CD4-positive, alpha-beta T cell (primary cell): ENCODE measurements at regions of chr5 and their contacts with region 1.

Region 1: GRCh38 chr5:95808686-95809413 is 13.7 kb downstream of the GLRX start:
- DNase-seq: peak; percentile 59 to 94 (median 76)
- ATAC-seq: peak; percentile 100
- H3K4me3 ChIP-seq: peak overlapping the region; percentile 9
- H3K4me3 Mint-ChIP-seq: peak overlapping the region; percentile 26
- H3K27ac ChIP-seq: peak overlapping the region; percentile 63 to 79
- H3K27ac Mint-ChIP-seq: peak overlapping the region; percentile 76
- H3K4me1 ChIP-seq: peaks cover 59% of the 10 kb centered on the region
- H3K4me1 Mint-ChIP-seq: peaks cover 65% of the 10 kb centered on the region
- H3K27me3 ChIP-seq: no peaks in the 10 kb centered on the region
- H3K27me3 Mint-ChIP-seq: no peaks in the 10 kb centered on the region
- CTCF ChIP-seq: no peak

Region 2: GRCh38 chr5:95822542-95823181 is 13.8 kb after region 1 on chr5 and contains the start of gene GLRX:
- CTCF ChIA-PET with region 1: interaction called, 4 read pairs
- POLR2A ChIA-PET with region 1: interaction called, 157 read pairs
- intact Hi-C with region 1: loop called (anchors 1 to 2 kb)
- DNase-seq: peak; percentile 22 to 76 (median 50)
- ATAC-seq: peak; percentile 39
- H3K4me3 ChIP-seq: peak within 1 kb of the TSS; percentile 84
- H3K4me3 Mint-ChIP-seq: peak within 1 kb of the TSS; percentile 98
- H3K27ac ChIP-seq: peak within 1 kb of the TSS; percentile 84 to 86
- H3K27ac Mint-ChIP-seq: peak within 1 kb of the TSS; percentile 83
- H3K4me1 ChIP-seq: peaks cover 64% of the 10 kb centered on the region
- H3K4me1 Mint-ChIP-seq: peaks cover 73% of the 10 kb centered on the region
- H3K27me3 ChIP-seq: no peaks in the 10 kb centered on the region
- H3K27me3 Mint-ChIP-seq: no peaks in the 10 kb centered on the region
- CTCF ChIP-seq: no peak
- total RNA-seq, gene GLRX: 16.9 to 18.7 TPM